ENCODE measurements at regions of chr12 and their contacts with region 1.

Region 1: DNA sequence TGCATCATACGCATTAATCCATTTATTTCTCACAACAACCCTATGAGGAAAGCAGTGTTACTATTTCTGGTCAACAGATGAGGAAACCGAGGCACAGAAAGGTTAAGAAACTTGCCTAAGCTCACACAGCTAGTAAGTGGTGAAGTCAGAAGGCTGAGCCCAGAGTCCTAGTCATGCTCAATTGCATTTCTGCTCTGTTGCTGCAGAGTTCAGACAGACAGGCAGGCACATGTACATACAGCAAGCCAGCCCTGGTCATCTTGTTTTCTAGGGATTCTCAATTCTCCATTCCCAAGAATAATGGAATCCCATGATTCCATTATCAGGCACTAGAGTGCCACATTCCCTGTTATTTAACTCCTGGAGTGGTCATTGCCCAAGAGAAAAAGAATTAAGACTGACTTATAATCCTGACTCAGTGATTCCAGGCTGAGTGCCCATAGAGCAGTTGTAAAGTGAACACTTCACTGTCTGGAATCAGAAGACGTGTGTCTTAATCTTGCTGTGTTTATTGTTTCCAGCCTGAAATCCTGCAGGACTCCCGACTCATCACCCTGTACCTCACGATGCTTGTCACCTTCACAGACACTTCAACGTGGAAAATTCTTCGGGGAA is 10.7 kb downstream of the UBE3B start:
- DNase-seq: no peak
- H3K4me3 ChIP-seq: no peak overlapping the region
- H3K27ac ChIP-seq: no peak overlapping the region
- H3K4me1 ChIP-seq: no peaks in the 10 kb centered on the region
- H3K27me3 ChIP-seq: no peaks in the 10 kb centered on the region
- CTCF ChIP-seq: no peak
- POLR2A ChIP-seq: no peak

Region 2: DNA sequence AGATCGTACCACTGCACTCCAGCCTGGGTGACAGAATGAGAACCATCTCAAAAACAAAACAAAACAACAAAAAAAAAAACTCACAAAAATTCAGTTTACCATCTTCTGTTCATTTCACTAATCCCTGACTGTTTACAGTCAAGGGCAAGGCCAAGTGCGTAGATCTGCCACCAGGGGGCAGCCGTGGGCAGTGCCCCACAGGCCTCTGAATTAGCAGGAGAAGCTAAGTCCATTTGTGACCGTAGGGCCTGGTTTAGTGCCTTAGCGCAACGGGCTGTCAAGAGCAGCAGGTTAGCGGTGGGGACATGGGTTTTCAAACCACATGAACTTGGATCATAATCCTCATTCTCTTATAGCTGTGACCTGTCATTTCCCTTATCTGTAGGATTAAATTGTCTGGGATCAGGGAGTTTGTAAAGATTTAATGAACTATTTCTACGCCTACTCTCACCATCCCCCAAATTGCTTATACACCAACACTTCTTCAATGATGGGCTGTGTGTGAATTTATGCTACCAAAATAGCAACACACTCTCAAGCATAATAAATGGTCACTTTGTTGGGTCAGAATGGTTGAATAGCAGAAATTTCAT is 60.0 kb before region 1 on chr12:
- intact Hi-C with region 1: loop called (anchors 10 kb)
- DNase-seq: peak; percentile 81 to 82
- H3K4me3 ChIP-seq: no peak overlapping the region
- H3K27ac ChIP-seq: no peak overlapping the region
- H3K4me1 ChIP-seq: no peaks in the 10 kb centered on the region
- H3K27me3 ChIP-seq: no peaks in the 10 kb centered on the region
- CTCF ChIP-seq: peak; percentile 89 to 98 (median 93)
- POLR2A ChIP-seq: no peak